Endothelial cell of umbilical vein (primary cell): ENCODE measurements at regions of chr1 and their contacts with region 1.

Region 1: DNA sequence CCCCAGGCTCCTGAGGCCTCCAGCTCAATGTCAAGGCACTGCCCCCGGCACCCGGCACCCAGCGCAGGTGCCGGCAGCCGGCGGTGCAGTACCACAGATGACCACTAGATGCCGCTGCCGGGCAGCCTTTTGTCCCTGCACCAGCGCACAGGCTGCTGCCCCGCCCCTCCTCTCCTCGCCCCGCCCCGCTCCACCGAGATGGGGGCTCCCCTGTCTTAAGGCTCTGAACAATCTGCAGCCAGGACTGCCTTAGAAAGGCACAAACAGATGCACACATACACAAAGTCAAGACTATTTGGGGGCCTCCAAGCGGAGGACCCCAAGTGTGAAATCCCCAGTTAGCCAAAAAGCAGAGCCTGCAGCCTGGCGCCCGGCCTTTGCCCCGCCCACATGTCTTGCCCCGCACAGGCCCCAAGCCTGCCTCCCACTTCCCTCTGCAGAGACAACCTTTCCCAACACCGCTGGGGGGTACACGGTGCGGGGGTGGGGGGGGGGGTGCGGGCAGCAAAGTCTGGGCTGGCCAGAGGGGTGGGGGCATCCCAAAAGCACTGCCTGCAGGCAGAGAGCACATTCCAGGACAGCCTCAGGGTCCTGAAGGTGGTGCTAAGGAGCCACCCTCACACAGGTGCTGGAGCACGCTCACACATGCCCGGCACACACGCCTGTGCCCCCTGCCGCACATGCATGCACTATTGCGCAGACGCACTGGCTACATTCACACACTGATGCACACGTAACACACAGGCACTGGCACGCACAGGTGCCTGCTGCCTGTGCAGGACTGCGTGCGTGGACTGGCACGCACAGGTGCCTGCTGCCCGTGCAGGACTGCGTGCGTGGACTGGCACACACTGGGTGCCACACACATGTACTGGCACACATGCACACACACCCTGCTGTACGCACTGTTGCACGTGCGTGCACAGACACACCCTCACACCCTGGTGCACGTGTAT is 37.1 kb downstream of the ARHGEF16 start:
- DNase-seq: peak; percentile 62
- H3K4me3 ChIP-seq: no peak overlapping the region
- H3K27ac ChIP-seq: no peak overlapping the region
- H3K4me1 ChIP-seq: no peaks in the 10 kb centered on the region
- H3K27me3 ChIP-seq: no peaks in the 10 kb centered on the region
- CTCF ChIP-seq: peak; percentile 88 to 98
- POLR2A ChIP-seq: no peak

Region 2: DNA sequence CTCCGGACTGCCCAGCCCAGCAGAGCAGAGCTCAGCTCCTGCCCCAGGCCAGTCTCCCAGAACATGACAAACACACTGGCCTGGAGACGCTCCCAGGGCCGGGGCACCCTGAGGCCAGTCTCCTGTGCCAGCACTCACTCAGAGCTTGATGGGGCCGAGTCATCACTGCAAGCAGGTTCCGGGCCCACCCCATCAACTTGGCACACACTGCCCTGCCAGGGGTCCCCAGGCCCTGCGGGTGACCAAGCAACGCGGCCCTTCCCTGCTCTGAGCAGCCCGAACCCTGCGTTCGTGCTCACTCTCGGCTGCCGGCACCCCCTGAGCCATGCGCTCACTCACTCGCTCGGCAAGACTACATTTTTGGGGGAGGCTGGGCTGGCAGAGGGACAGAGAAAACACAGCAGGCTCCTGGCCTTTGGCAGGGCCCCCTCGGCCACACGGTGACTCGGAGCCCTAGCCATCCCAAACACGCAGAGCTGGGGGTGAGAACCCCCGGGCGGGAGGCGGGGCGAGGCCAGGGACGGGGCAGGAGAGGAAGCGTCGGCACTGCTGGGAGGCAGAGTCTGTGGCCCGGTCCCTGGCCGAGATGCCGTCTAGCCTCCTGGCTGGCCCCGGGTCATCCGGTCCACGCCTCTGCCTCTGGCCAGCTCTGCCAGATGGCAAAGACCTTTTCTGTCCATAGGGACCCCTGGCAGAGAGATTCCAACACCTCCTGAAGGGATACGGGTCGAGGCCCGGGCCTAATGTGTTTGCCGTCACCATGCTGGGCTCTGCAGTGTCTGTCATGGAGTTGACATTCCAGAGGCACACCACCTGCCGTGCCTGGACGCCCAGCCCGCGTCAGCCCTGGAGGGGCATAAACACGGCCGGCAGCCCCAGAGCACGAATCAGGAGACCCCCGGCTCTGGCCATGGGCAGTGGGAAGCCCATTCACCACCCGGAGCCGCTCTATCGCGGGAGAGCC is 51.8 kb after region 1 on chr1:
- CTCF ChIA-PET with region 1: interaction called, 12 read pairs
- POLR2A ChIA-PET with region 1: no interaction called
- dilution Hi-C with region 1: no loop called
- intact Hi-C with region 1: loop called (anchors 1 kb)
- DNase-seq: peak; percentile 29
- H3K4me3 ChIP-seq: no peak overlapping the region
- H3K27ac ChIP-seq: no peak overlapping the region
- H3K4me1 ChIP-seq: peaks cover 17% of the 10 kb centered on the region
- H3K27me3 ChIP-seq: no peaks in the 10 kb centered on the region
- CTCF ChIP-seq: no peak
- POLR2A ChIP-seq: no peak

Region 3: DNA sequence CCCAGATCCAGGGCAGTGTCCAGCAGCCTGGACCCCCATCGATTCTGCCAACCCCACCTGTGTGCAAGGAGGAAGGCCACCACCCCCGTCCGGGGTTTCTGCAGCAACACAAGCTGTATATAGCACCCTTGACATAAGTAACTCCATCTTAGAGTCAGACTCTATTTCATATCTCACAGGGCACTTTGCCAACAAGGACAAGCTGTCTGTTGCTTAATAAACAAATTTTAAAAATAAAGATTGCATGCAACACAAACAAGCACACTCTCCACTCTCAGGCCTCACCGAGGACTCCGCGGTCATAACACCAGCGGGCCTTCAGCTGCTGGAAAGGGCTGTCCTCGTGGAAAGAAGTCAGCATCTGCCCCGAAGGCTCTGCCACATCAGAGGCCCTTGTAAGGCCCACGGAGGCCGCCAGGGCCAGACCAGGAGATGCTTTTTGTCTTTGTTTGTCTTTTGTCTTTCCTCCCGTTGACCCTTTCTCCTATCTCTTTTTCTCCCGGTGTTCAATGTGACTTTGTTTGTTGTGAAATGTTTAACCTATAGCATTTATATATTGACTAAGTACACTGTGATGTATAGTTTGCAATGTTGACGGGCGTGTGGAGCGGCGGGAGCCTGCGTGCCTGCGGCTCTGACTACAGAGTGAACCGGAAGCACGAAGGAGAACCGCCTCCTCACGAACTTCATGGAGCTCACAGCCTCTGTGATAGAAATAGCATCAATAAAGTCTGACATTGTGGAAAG is 95.5 kb after region 1 on chr1:
- CTCF ChIA-PET with region 1: interaction called, 3 read pairs
- POLR2A ChIA-PET with region 1: no interaction called
- dilution Hi-C with region 1: no loop called
- intact Hi-C with region 1: loop called (anchors 1 kb)
- DNase-seq: no peak
- H3K4me3 ChIP-seq: no peak overlapping the region
- H3K27ac ChIP-seq: no peak overlapping the region
- H3K4me1 ChIP-seq: peaks cover 14% of the 10 kb centered on the region
- H3K27me3 ChIP-seq: no peaks in the 10 kb centered on the region
- CTCF ChIP-seq: no peak
- POLR2A ChIP-seq: no peak

Region 4: GRCh38 chr1:3624200-3625136 is 132.9 kb after region 1 on chr1 and contains the start of gene TPRG1L:
- CTCF ChIA-PET with region 1: interaction called, 150 read pairs
- POLR2A ChIA-PET with region 1: no interaction called
- dilution Hi-C with region 1: no loop called
- intact Hi-C with region 1: loop called (anchors 1 kb)
- DNase-seq: peak; percentile 97
- H3K4me3 ChIP-seq: peak within 1 kb of the TSS; percentile 53 to 60 (median 54)
- H3K27ac ChIP-seq: peak within 1 kb of the TSS; percentile 25
- H3K4me1 ChIP-seq: peaks cover 13% of the 10 kb centered on the region
- H3K27me3 ChIP-seq: no peaks in the 10 kb centered on the region
- CTCF ChIP-seq: no peak
- POLR2A ChIP-seq: peak; percentile 3
- total RNA-seq, gene TPRG1L: 46.2 and 53.8 TPM in 2 replicates

Region 5: DNA sequence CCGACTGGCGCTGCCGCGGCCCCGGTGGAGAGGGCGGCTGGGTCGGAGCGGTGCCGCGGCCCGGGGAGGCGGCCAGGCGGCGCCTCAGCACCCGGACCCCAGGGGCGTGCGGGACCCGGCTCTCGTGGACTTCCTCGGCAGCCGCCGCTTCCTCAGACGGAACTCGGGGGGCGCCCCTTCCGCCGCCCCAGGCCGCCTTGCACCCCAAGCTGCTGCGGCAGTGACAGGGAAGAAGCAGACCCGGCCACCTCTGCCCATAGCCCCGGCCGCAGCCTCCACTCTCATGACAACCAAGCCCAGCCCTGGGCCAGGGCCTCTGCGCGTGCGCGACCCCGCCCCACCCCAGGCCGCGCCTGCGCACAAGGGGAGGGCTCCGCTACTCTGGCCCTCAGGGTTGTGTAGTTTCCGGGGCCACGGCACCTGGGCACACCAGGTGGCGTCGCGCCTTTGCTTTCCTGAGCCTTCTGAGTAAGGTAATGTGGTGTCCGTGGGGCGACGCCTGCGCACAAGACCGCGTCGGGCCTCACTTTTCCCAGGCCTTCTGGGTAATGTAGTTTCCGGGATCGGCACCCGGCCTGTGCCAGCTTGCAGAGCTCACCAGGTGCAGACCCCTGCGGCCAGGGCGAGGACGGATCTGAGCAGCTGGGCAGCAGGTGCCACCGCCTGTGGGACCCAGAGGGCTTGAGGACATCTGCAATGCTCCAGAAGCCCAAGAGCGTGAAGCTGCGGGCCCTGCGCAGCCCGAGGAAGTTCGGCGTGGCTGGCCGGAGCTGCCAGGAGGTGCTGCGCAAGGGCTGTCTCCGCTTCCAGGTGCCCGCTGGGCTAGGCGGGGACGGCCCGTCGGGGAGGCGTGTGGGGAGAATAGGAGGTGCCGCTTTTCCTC is 365.6 kb after region 1 on chr1 and contains the starts of genes CEP104 and DFFB:
- CTCF ChIA-PET with region 1: no interaction called
- POLR2A ChIA-PET with region 1: no interaction called
- dilution Hi-C with region 1: no loop called
- intact Hi-C with region 1: no loop called
- DNase-seq: peak; percentile 90
- H3K4me3 ChIP-seq: peak within 1 kb of the TSS; percentile 16 to 76 (median 72)
- H3K27ac ChIP-seq: peak within 1 kb of the TSS; percentile 59
- H3K4me1 ChIP-seq: peaks cover 9% of the 10 kb centered on the region
- H3K27me3 ChIP-seq: no peaks in the 10 kb centered on the region
- CTCF ChIP-seq: no peak
- POLR2A ChIP-seq: peak; percentile 61
- total RNA-seq, gene CEP104: 41.8 and 43.0 TPM in 2 replicates
- total RNA-seq, gene DFFB: 10.6 and 11.7 TPM in 2 replicates